ENCODE measurements at regions of chr1 and their contacts with region 1.

Region 1: DNA sequence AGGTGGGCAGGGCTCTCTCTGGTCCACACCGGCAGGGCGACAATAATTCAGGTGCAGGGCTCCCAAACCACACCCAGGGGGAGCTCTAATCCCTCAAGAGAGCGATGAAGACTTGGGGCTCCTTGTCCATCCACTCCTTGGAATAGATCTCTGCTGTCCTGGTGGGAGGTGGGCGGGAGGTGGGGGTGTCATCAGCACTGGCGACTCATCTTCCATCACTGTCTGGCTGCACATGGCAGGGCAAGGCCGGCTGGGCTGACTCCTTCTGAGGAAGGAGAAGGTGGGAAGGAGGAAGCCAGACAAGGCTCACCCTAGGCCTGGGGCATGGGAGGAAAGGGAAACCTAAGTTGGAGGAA is 29.3 kb downstream of the TNNT2 start:
- DNase-seq: peak; percentile 98
- ATAC-seq: peak; percentile 79
- H3K4me3 ChIP-seq: no peak overlapping the region
- H3K27ac ChIP-seq: no peak overlapping the region
- H3K4me1 ChIP-seq: peaks cover 24% of the 10 kb centered on the region
- H3K27me3 ChIP-seq: no peaks in the 10 kb centered on the region
- CTCF ChIP-seq: peak; percentile 100

Region 2: DNA sequence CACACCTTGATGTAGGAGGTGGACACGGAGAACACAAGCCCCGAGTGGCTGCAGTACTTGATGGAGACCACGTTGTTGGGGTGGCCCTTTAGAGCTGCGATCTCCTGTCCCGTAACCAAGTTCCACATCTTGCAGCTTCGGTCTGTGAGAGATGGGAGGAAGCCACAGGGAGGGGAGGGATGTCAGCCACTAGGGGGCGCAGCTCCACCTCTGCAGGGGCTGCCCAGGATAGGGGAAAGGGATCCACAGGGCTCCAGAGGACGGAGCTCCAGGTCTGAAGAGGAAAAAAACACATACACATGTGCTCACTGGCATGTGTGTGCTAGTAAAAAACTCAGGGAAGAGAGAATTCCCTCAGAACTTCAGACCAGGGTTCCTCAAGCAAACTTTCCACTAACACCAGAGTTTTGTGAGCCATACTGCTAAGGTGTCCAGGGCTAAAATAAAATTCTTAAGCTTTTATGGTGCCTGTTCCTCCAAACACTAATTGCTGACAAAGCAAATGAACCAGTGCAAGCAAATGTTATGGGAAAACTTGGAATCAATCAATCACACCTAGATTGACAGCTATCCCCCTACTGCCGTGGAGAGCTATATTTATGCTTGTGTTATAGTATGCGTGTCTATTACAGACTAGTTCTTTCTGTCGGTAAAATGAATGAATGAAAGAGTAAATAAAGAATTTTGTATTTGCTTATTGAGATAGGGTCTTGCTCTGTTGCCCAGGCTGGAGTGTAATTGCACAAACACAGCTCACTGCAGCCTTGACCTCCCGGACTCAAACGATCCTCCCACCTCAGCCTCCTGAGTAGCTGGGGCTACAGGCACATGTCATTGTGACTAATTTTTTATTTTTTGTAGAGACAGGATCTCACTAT is 368.4 kb before region 1 on chr1:
- CTCF ChIA-PET with region 1: no interaction called
- POLR2A ChIA-PET with region 1: no interaction called
- intact Hi-C with region 1: no loop called
- DNase-seq: peak; percentile 87
- ATAC-seq: peak; percentile 87
- H3K4me3 ChIP-seq: no peak overlapping the region
- H3K27ac ChIP-seq: no peak overlapping the region
- H3K4me1 ChIP-seq: no peaks in the 10 kb centered on the region
- H3K27me3 ChIP-seq: 0 out of 2 replicates have a peak, but pooled peaks cover 7% of the 10 kb centered on the region
- CTCF ChIP-seq: peak; percentile 100

Region 3: GRCh38 chr1:201015551-201016091 is 332.6 kb before region 1 on chr1:
- CTCF ChIA-PET with region 1: no interaction called
- POLR2A ChIA-PET with region 1: no interaction called
- intact Hi-C with region 1: no loop called
- DNase-seq: no peak
- ATAC-seq: no peak; the same call in 1 of the 2 replicates
- H3K4me3 ChIP-seq: no peak overlapping the region
- H3K27ac ChIP-seq: no peak overlapping the region
- H3K4me1 ChIP-seq: peaks cover 11% of the 10 kb centered on the region
- H3K27me3 ChIP-seq: peaks cover 38% of the 10 kb centered on the region
- CTCF ChIP-seq: no peak

Region 4: DNA sequence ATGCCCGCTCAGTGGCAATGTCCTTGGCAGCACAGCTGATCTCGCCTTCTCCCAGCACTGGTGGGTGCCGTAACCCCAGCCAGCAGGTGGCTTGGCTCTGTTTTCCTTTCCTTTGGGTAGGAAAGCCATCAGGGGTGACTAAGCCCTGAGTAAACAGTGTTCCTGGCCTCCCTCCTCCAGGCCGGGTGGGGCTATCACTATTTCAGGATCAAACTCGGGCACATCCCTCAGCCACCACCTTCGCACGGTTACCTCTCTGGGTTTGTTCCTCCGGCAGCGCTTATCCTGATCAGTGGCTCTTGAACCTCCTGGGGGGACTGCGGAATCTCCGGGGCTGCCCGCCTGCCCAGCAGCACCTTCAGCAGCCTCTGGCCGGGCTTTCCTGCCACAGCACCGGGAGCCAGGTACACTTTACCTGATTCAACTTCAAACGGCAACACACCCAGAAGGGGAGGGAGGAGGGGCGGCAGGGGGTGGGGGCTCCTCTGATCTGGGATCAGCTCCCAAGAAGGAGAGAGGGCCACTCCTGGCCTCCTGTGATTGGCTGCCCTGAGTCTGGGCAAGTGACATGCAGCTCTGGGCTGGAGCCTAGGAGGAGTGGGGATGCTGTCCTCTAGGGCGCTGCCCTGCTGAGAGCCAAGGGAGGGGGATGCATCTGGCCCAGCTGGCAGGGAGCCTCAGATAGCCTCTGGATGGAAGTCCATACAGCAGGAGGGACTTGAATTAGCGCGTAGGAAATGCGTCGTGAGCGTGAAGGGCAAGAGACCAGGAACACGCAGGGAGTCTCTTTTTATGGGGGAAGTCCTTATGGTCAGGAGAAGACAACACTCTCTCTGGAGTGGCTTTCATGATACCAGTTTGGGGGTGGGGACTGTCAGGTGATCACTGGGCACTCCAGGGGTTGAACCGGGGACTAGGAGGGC is 221.1 kb before region 1 on chr1 and contains the start of gene ASCL5:
- CTCF ChIA-PET with region 1: no interaction called
- POLR2A ChIA-PET with region 1: no interaction called
- intact Hi-C with region 1: loop called (anchors 5 kb)
- DNase-seq: peak; percentile 100
- ATAC-seq: peak; percentile 90
- H3K4me3 ChIP-seq: peak within 1 kb of the TSS; percentile 59
- H3K27ac ChIP-seq: peak within 1 kb of the TSS; percentile 35
- H3K4me1 ChIP-seq: peaks cover 38% of the 10 kb centered on the region
- H3K27me3 ChIP-seq: no peaks in the 10 kb centered on the region
- CTCF ChIP-seq: peak; percentile 89
- total RNA-seq, gene ASCL5: 2.4 and 3.1 TPM in 2 replicates

Region 5: DNA sequence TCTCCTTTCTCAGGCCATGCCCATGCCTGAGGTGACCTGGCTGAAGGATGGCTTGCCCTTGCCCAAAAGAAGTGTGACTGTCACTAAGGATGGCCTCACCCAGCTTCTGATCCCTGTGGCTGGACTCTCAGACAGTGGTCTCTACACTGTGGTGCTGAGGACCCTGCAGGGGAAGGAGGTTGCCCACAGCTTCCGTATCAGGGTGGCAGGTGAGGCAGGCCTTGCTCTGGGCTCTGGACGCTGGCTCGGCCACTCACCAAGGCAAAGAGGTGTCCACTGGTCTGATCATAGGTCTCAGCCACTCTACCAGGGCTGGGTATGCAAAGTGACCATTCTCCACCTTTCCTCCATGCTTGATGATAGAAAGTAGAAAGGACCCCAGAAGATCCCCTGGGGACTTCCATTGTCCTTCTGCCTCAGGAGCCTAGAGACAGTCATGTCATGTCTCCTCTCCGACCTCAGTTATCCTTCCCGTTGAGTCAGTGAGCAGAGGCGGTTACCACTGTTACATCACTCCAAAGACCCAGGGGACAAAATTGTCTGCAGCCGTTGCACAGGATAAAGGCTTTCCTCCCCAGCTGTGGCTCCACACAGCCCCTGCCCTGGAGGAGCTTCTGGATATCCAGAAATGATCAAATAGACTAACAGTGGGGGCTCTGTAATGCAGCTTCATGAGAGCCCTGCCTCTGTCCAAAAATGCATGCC is 123.4 kb before region 1 on chr1:
- CTCF ChIA-PET with region 1: no interaction called
- POLR2A ChIA-PET with region 1: no interaction called
- intact Hi-C with region 1: no loop called
- DNase-seq: no peak
- ATAC-seq: no peak
- H3K4me3 ChIP-seq: no peak overlapping the region
- H3K27ac ChIP-seq: no peak overlapping the region
- H3K4me1 ChIP-seq: peaks cover 10% of the 10 kb centered on the region
- H3K27me3 ChIP-seq: no peaks in the 10 kb centered on the region
- CTCF ChIP-seq: no peak

Region 6: GRCh38 chr1:201261771-201262465 is 86.3 kb before region 1 on chr1:
- CTCF ChIA-PET with region 1: interaction called, 14 read pairs
- POLR2A ChIA-PET with region 1: no interaction called
- intact Hi-C with region 1: loop called (anchors 1 kb)
- DNase-seq: no peak
- ATAC-seq: no peak
- H3K4me3 ChIP-seq: no peak overlapping the region
- H3K27ac ChIP-seq: no peak overlapping the region
- H3K4me1 ChIP-seq: peaks cover 18% of the 10 kb centered on the region
- H3K27me3 ChIP-seq: no peaks in the 10 kb centered on the region
- CTCF ChIP-seq: no peak

Region 7: DNA sequence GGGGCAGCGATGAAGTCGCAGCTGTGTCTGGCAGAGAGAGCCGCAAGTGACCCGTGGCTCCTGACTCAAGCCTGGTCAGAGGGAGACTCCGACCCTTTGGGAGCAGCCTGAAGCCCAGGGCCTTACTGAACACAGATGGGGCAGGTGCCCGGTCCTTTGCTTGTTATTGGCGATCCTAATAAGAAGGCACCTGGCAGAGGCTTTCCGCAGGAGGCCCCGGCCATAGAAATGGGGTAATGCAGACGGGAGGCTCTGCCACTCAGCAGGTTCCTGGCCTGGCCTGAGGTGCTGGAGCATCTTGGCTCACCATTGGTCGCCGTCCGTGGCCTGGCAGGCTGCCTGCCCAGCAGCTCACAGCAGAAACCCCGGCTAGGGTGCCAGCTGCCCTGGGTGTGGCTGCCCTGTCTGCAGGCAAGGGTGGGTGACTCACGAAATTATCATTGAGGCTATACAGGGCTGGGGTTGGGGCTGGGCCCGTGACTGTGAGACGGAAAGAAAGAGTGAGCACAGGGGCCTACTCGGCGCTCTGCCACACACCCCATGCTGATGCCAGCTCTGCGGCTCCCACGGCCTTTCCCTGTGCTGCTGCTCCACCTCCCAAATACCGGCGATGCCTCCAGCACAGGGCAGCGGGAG is 73.0 kb before region 1 on chr1:
- CTCF ChIA-PET with region 1: interaction called, 14 read pairs
- POLR2A ChIA-PET with region 1: no interaction called
- intact Hi-C with region 1: no loop called
- DNase-seq: peak; percentile 100
- ATAC-seq: peak; percentile 90
- H3K4me3 ChIP-seq: peak overlapping the region; percentile 2; the same call in 1 of the 2 replicates
- H3K27ac ChIP-seq: peak overlapping the region; percentile 88
- H3K4me1 ChIP-seq: peaks cover 37% of the 10 kb centered on the region
- H3K27me3 ChIP-seq: no peaks in the 10 kb centered on the region
- CTCF ChIP-seq: no peak

Region 8: GRCh38 chr1:201288766-201289165 is 59.4 kb before region 1 on chr1:
- CTCF ChIA-PET with region 1: interaction called, 13 read pairs
- POLR2A ChIA-PET with region 1: no interaction called
- intact Hi-C with region 1: loop called (anchors 1 kb)
- DNase-seq: no peak
- ATAC-seq: no peak
- H3K4me3 ChIP-seq: peak overlapping the region; percentile 0; the same call in 1 of the 2 replicates
- H3K27ac ChIP-seq: peak overlapping the region; percentile 33
- H3K4me1 ChIP-seq: peaks cover 61% of the 10 kb centered on the region
- H3K27me3 ChIP-seq: no peaks in the 10 kb centered on the region
- CTCF ChIP-seq: peak; percentile 47; the same call in 1 of the 2 replicates

Region 9: DNA sequence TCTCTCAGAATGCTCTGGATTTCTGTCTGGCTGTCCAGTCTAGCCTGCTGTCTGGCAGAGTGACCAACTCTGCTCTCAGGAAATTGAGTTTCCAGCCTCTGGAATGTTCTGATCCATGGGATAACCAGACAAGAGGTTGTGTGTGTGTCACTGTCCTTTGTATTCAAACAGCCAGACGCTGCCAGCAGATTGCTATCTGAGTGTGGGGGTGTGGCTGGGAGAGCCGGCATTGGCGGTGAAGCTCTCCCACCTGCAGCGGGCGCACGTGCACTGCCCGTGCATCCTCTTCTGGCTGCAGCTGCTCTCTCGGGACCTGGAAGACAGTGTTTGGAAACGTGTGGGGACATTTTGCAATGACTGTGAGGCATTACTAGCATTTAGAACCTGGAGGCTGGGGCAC is 38.8 kb before region 1 on chr1:
- CTCF ChIA-PET with region 1: interaction called, 14 read pairs
- POLR2A ChIA-PET with region 1: interaction called, 19 read pairs
- intact Hi-C with region 1: loop called (anchors 1 kb)
- DNase-seq: peak; percentile 100
- ATAC-seq: peak; percentile 37
- H3K4me3 ChIP-seq: 0 out of 2 replicates have a peak overlapping the region, but pooled peaks have one; percentile 1
- H3K27ac ChIP-seq: peak overlapping the region; percentile 89
- H3K4me1 ChIP-seq: peaks cover 72% of the 10 kb centered on the region
- H3K27me3 ChIP-seq: no peaks in the 10 kb centered on the region
- CTCF ChIP-seq: peak; percentile 81

Measured in PC-3 (cell line).